BJ (cell line): ENCODE measurements at regions of chr20 and their contacts with region 1.

Region 1: GRCh38 chr20:51800060-51800794 is 2.1 kb downstream of the SALL4 start:
- DNase-seq: no peak
- H3K4me3 ChIP-seq: peak overlapping the region; percentile 40
- H3K27me3 ChIP-seq: peaks cover 6% of the 10 kb centered on the region; the same call in 1 of the 2 replicates
- CTCF ChIP-seq: peak; percentile 98

Region 2: GRCh38 chr20:51639206-51639832 is 160.9 kb before region 1 on chr20:
- CTCF ChIA-PET with region 1: interaction called, 19 read pairs
- POLR2A ChIA-PET with region 1: no interaction called
- DNase-seq: no peak
- H3K4me3 ChIP-seq: no peak overlapping the region
- H3K27me3 ChIP-seq: no peaks in the 10 kb centered on the region
- CTCF ChIP-seq: peak; percentile 87

Region 3: GRCh38 chr20:51775241-51775640 is 25.0 kb before region 1 on chr20:
- CTCF ChIA-PET with region 1: interaction called, 10 read pairs
- POLR2A ChIA-PET with region 1: no interaction called
- DNase-seq: no peak
- H3K4me3 ChIP-seq: no peak overlapping the region
- H3K27me3 ChIP-seq: no peaks in the 10 kb centered on the region
- CTCF ChIP-seq: no peak

Region 4: DNA sequence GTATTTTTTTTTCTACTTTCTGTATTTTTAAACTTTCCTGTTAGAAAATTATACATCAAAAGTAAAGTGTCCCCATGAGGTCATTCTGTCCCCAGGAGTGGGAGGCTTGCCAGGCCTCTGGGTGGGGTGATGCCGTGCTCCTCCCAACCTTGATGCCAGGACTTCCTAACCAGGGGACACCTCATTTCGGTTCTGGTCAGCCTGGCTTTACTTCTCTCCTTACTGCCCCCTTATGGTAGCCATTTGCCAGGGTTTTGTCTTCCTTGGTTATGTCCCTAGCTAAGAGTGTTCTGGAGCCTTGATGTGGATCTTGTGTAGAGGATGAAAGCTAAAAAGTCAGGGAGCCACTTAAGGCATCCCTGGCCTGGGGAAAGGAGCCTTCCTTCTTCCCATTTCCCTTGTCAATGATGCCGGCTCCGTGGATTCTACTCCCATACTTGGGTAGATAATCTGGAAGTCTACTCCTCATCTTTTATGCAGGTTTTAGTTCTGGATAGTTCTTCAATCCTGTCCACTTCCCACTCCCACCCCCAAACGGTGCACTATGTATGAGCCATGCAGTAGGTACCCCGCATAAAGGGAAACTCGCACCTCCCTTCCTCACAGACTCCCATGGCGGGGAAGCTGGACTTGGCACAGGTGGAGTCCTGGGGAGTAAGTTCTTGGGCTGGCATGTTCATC is 166.2 kb after region 1 on chr20:
- CTCF ChIA-PET with region 1: interaction called, 20 read pairs
- POLR2A ChIA-PET with region 1: no interaction called
- DNase-seq: no peak
- H3K4me3 ChIP-seq: no peak overlapping the region
- H3K27me3 ChIP-seq: no peaks in the 10 kb centered on the region
- CTCF ChIP-seq: peak; percentile 83

Region 5: GRCh38 chr20:52047811-52048764 is 247.9 kb after region 1 on chr20:
- CTCF ChIA-PET with region 1: no interaction called
- POLR2A ChIA-PET with region 1: no interaction called
- DNase-seq: no peak
- H3K4me3 ChIP-seq: no peak overlapping the region
- H3K27me3 ChIP-seq: no peaks in the 10 kb centered on the region
- CTCF ChIP-seq: no peak

Region 6: GRCh38 chr20:52060794-52061714 is 260.8 kb after region 1 on chr20:
- CTCF ChIA-PET with region 1: interaction called, 16 read pairs
- POLR2A ChIA-PET with region 1: no interaction called
- DNase-seq: no peak
- H3K4me3 ChIP-seq: no peak overlapping the region
- H3K27me3 ChIP-seq: no peaks in the 10 kb centered on the region
- CTCF ChIP-seq: peak; percentile 38

Region 7: GRCh38 chr20:52083627-52084232 is 283.5 kb after region 1 on chr20:
- CTCF ChIA-PET with region 1: interaction called, 34 read pairs
- POLR2A ChIA-PET with region 1: no interaction called
- DNase-seq: no peak
- H3K4me3 ChIP-seq: no peak overlapping the region
- H3K27me3 ChIP-seq: no peaks in the 10 kb centered on the region
- CTCF ChIP-seq: peak; percentile 71